Mammary epithelial cell (primary cell): ENCODE measurements at regions of chr14 and their contacts with region 1.

Region 1: DNA sequence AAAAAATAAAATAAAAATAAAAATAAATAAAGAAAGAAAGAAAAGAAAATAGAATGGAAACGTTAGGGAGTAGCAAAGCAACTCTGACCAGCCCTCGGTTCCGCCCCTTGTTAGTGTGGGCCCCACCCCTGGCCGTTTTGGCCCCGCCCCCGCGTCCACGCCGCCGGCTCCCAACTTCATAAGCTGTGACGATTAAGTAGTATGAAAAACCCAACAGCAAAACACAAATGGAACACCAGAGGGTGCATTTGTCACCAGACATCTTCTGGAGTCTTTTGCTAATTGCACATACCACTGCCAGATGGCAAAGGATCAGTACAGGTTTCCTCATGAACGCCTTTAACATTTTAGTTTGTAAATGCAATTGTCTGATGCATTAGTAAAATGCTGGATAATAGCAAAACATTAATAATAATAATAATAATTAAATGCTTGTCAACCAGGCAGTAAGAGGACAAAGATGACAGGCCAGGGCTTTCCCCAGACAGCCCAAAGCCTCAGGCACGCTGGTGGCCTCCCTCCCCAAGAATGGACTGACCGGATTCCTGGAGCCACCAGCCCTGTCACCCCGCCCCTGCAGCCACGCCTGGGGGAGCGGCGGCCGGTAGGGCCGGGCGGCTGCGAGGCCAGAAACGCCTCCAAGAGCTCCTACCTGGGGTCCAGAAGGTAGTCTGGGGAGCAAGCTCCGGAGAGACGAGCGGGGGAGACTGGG is 23.6 kb downstream of the HSP90AA1 start:
- DNase-seq: peak; percentile 84
- H3K4me3 ChIP-seq: no peak overlapping the region
- H3K27ac ChIP-seq: no peak overlapping the region
- H3K4me1 ChIP-seq: peaks cover 10% of the 10 kb centered on the region
- H3K27me3 ChIP-seq: no peaks in the 10 kb centered on the region
- CTCF ChIP-seq: peak; percentile 43 to 62

Region 2: DNA sequence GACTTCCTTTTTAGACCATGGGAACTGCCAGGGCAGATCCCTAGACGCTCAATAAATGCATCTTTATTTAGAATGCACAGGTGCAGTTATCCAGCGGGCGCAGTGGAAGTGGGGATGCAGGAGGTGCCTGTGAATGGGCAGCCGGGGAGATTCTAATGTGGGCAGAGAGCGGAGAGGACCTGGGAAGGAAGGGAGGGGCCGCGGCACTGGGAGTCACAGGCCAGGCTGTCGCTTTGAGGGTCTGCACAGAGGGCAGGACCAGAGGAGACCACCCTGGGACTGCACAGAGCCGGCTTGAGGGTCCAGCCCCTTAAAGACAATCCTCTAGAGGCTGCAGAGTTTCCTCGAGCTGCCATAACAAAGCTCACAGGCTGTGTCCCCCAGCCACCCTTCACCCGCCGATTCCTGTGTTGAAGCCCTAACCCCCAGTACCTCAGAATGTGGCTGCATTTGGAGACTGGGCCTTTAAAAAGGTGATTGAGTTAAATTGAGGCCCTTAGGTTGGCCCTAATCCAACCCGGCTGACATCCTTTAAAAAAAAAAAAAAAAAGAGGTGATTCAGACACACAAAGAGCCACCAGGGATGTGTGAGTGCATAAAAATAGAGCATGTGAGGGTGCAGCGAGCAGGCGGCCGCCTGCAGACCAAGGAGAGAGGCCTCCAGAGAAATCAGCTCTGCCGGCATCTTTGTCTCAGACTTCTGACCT is 346.1 kb before region 1 on chr14:
- CTCF ChIA-PET with region 1: no interaction called
- dilution Hi-C with region 1: no loop called
- in situ Hi-C with region 1: no loop called
- intact Hi-C with region 1: no loop called
- DNase-seq: peak; percentile 33
- H3K4me3 ChIP-seq: no peak overlapping the region
- H3K27ac ChIP-seq: no peak overlapping the region
- H3K4me1 ChIP-seq: peaks cover 6% of the 10 kb centered on the region
- H3K27me3 ChIP-seq: no peaks in the 10 kb centered on the region
- CTCF ChIP-seq: no peak

Region 3: DNA sequence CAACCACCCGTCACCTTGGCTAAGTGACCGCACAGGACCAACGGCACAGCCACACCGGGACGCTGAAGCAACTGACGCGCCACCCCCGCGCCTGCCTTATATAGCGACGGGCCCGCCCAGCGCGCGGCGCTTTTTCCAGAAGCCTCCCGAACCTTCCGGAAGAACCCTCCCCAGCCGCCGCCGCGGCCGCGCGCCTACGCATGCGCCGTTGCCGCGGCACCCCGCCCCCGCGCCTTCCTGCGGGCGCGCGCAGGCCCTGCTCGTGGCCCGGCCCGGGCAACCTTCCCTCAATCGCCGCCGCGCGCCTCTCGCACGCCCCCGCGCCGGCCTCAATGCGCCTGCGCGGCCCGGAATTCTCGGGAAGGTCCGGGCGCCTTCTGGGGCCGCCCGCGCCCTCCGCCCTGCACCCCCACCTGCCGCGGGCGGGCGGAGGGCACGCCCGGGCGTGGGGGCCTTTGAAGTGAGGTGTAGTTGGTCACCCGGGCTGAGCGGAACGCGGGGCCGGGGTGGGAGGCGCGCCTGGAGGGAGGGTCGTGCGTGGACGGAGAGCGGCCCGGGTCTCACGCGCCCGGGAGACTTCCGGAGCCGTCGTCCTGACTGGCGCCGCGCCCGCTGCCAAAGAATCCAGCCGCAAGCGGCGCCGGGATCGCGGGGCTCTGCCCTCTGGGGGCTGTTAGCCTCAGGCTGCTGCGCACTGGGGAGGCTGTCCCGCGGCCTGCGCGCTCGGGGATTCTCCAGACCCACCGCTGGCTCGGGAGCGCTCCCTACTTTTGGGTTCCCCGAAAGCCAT is 23.9 kb after region 1 on chr14 and contains the start of gene HSP90AA1:
- CTCF ChIA-PET with region 1: no interaction called
- dilution Hi-C with region 1: no loop called
- in situ Hi-C with region 1: no loop called
- intact Hi-C with region 1: loop called (anchors 1 kb)
- DNase-seq: peak; percentile 90
- H3K4me3 ChIP-seq: peak within 1 kb of the TSS; percentile 66 to 86 (median 78)
- H3K27ac ChIP-seq: peak within 1 kb of the TSS; percentile 74
- H3K4me1 ChIP-seq: peaks cover 37% of the 10 kb centered on the region
- H3K27me3 ChIP-seq: no peaks in the 10 kb centered on the region
- CTCF ChIP-seq: peak in 1 of 2 donors; percentile 4
- total RNA-seq, gene HSP90AA1: 310 to 486 TPM

Region 4: DNA sequence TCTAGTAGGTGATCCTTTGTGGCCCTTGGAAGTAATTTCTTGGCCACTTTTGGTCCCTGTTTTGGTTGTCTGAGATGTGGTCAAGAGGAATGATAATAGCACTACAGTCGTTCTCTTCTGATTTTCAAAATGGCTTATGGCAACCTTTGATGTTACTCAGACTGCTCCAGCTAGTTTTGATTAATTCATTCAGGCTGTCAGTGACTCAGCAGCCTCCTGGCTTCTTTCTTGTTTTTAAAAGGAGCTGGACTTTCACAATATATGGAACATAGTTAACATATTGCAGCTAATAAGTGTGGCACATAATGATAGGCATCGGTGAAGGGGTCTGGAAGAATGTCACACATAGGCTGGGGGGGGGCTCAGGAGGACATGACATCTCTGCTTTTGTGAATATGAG is 123.8 kb after region 1 on chr14:
- CTCF ChIA-PET with region 1: no interaction called
- dilution Hi-C with region 1: no loop called
- in situ Hi-C with region 1: no loop called
- intact Hi-C with region 1: no loop called
- DNase-seq: peak; percentile 80
- H3K4me3 ChIP-seq: no peak overlapping the region
- H3K27ac ChIP-seq: peak overlapping the region; percentile 15
- H3K4me1 ChIP-seq: peaks cover 26% of the 10 kb centered on the region
- H3K27me3 ChIP-seq: no peaks in the 10 kb centered on the region
- CTCF ChIP-seq: no peak